Ascending aorta (tissue), 2 donors: ENCODE measurements at regions of chr12 and their contacts with region 1.

Region 1: DNA sequence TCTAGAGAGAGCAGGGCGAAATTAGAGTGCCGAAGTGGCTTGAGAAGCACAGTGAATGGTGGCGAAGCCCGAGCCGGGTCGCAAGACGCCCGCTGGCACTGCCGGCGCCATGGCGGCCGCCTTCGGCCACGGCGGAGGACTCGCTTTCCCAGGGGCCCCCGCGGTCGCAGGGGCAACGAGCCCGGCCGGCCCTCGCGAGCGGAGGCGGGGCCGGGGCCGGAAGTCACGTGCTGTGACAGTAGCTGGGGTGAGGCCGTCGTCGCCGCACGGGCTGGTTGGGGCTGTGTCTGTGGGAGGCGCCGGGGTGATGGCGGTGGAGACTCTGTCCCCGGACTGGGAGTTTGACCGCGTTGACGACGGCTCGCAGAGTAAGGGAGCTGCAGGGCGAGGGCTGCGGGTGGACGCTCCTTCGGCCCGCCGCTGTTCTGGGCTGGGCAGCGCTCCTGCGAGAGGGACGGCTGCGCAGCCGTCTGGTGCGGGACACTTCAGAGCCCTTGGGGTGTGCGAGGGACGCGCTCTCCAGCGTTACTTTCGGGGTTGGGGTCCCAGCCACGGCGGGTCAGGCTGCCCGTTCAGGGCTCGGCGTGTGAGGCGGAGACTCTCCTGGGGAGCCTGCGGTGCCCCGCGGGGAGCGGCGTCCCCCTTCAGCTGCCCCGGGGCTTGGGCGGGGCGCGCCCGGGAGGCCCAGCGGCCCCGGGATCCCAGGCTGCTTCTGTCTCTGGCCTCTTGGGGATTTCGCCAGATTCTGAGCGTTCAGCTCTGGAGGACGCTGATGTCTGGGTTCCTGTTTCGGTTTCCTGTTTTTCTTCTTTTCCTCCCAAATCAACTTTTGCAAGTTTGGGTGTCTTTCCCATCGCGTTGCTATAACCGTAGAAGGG is at the start of gene WASHC4:
- DNase-seq: peak; percentile 77 to 96
- H3K4me3 ChIP-seq: peak within 1 kb of the TSS; percentile 83 to 94
- H3K27ac ChIP-seq: peak within 1 kb of the TSS; percentile 97 to 98
- H3K4me1 ChIP-seq: peaks cover 6 to 11% of the 10 kb centered on the region in 2 donors
- H3K27me3 ChIP-seq: no peaks in the 10 kb centered on the region
- CTCF ChIP-seq: no peak
- total RNA-seq, gene WASHC4: 22.8 TPM

Region 2: DNA sequence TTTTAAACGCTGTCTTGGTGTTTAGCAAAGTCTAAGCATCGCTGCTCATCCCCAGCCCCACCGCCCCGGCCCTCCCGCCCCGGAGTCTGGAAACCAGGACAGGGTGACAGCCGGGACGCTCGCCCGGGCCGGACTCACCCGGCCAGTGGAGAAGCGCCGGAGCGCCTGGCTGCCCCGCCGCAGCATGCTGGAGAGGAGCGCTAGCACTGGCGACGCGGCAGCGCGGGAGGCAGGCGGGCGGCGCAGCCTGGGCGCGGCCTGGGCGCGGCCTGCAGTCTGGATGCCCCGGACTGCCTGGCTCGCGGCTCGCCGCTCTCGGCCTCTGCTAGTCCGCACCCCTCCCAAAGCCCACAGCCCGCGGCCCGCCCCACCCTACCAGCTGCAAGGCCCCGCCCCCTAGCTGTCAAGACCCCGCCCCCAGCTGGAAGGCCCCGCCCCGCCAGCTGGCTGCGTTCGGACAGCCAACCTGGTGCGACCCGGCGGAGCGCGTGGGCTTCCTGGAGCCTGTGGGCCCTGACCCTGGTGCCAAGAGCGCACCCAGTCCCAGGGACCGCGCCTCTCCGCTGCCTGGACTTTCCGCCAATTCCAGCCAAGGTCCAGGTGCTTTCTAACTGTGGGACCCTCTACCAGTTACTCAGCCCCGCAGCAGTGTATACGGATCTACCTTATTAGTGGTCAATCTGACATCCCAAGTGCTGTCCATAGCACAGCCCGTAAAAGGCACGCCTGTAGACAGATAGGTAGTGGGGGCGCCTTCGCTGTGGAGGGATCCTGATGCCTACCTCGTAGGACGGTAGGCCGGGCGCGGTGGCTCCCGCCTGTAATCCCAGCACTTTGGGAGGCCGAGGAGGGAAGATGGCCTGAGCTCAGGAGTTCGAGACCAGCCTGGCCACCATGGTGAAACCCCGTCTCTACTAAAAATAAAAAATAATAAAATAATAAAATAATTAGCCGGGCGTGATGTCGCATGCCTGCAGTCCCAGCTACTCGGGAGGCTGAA is 23.2 kb before region 1 on chr12 and contains the start of gene ALDH1L2:
- intact Hi-C with region 1: loop called (anchors 1 kb)
- DNase-seq: peak; percentile 45 to 91
- H3K4me3 ChIP-seq: peak within 1 kb of the TSS; percentile 61 to 78
- H3K27ac ChIP-seq: peak within 1 kb of the TSS; percentile 54 to 70
- H3K4me1 ChIP-seq: peaks cover 0 to 5% of the 10 kb centered on the region in 2 donors
- H3K27me3 ChIP-seq: no peaks in the 10 kb centered on the region
- CTCF ChIP-seq: no peak
- total RNA-seq, gene ALDH1L2: 68.9 TPM